Activated naive CD4-positive, alpha-beta T cell treated with anti-CD3 and anti-CD28 coated beads for 36 hours (primary cell): ENCODE measurements at regions of chr18 and their contacts with region 1.

Region 1: DNA sequence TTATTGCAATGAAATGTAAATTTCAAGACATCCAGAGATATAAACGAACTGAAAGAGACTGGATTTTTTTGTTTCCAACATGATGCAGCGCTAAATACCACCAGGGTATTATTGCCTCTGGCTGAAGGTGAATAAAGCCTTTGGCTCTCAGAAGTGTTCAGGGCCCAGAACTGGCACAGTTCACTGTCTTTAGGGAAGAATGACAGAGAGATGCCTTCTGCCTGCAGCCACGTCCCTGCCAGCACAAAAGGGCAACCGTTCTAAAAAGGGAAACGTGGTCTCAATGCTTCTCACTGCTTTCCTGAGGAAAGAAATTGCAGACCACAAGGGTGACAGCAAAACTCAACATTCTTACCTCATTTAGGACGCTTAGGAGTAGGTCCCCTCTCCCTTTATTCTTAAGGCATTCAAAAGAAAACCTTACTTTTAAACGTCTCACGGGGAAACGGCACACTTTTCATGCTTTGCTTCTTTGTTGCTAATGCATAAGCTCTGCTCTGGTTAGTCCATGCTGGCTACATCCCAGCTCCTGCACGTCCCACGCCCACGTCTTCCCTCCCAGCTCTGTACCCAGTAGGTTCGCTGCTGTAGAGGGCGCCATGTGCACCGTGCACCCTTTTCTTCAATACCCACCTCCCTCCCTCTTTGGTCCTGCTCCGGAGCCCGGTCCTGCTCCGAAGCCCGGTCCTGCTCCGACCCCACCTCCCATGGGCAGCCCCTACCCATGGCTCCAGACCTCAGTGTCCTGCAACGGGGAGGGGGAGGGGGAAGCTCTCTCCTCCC is 171.0 kb downstream of the HRH4 start:
- DNase-seq: peak; percentile 5
- H3K4me3 Mint-ChIP-seq: no peak overlapping the region
- H3K27ac Mint-ChIP-seq: no peak overlapping the region
- H3K4me1 Mint-ChIP-seq: no peaks in the 10 kb centered on the region
- H3K27me3 Mint-ChIP-seq: no peaks in the 10 kb centered on the region

Region 2: DNA sequence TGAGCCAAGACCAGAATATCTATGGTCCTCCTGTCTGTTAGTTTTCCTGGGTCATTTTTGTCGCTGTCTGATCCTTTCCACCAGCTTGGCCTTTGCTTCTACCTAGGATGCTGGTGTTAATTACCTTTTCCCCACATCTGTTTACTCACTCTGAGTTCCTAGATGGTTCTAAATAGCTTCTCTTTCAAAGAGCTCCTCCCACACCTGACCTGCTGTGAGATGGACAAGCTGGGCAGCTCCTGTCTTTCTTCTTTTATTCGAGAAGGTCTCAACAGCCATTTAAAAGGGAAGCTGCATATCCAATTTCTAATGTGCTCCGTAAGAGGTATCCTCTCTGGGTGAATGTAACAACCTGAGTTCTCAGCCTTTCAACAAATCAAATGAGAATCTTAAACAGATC is 14.8 kb before region 1 on chr18:
- CTCF ChIA-PET with region 1: no interaction called
- intact Hi-C with region 1: no loop called
- DNase-seq: no peak
- H3K4me3 Mint-ChIP-seq: no peak overlapping the region
- H3K27ac Mint-ChIP-seq: no peak overlapping the region
- H3K4me1 Mint-ChIP-seq: no peaks in the 10 kb centered on the region
- H3K27me3 Mint-ChIP-seq: no peaks in the 10 kb centered on the region

Region 3: GRCh38 chr18:24695168-24695567 is 63.7 kb after region 1 on chr18:
- CTCF ChIA-PET with region 1: no interaction called
- intact Hi-C with region 1: loop called (anchors 10 kb)
- DNase-seq: no peak
- H3K4me3 Mint-ChIP-seq: no peak overlapping the region
- H3K27ac Mint-ChIP-seq: no peak overlapping the region
- H3K4me1 Mint-ChIP-seq: no peaks in the 10 kb centered on the region
- H3K27me3 Mint-ChIP-seq: no peaks in the 10 kb centered on the region